ENCODE measurements at regions of chr5 and their contacts with region 1.

Region 1: GRCh38 chr5:154513669-154514084 is 35.6 kb upstream of the HAND1 start:
- DNase-seq: peak; percentile 66
- H3K4me3 Mint-ChIP-seq: no peak overlapping the region
- H3K27ac Mint-ChIP-seq: no peak overlapping the region
- H3K4me1 Mint-ChIP-seq: peaks cover 19% of the 10 kb centered on the region
- H3K27me3 Mint-ChIP-seq: peaks cover 35% of the 10 kb centered on the region

Region 2: GRCh38 chr5:154487541-154487940 is 26.1 kb before region 1 on chr5:
- CTCF ChIA-PET with region 1: interaction called, 4 read pairs
- intact Hi-C with region 1: loop called (anchors 1 kb)
- DNase-seq: peak; percentile 71
- H3K4me3 Mint-ChIP-seq: no peak overlapping the region
- H3K27ac Mint-ChIP-seq: no peak overlapping the region
- H3K4me1 Mint-ChIP-seq: peaks cover 39% of the 10 kb centered on the region
- H3K27me3 Mint-ChIP-seq: peaks cover 76% of the 10 kb centered on the region

Region 3: DNA sequence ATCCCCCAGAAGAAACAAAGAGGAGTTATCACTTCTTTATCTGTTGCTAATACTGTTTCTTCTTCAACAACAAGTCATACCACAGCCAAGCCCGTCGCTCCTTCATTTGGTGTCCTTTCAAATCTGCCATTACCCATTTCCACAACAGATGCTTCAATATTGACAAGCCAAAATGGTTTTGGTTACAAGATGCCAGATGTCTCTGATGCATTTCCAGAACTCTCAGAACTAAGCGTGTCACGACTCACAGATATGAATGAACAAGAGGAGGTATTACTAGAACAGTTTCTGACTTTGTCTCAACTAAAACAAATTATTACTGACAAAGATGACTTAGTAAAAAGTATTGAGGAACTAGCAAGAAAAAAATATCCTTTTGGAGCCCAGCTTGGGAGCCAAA is 19.6 kb before region 1 on chr5:
- CTCF ChIA-PET with region 1: interaction called, 4 read pairs
- intact Hi-C with region 1: loop called (anchors 2 kb)
- DNase-seq: no peak
- H3K4me3 Mint-ChIP-seq: no peak overlapping the region
- H3K27ac Mint-ChIP-seq: no peak overlapping the region
- H3K4me1 Mint-ChIP-seq: no peaks in the 10 kb centered on the region
- H3K27me3 Mint-ChIP-seq: peaks cover 56% of the 10 kb centered on the region

Region 4: GRCh38 chr5:156164306-156164705 is 1650.6 kb after region 1 on chr5:
- CTCF ChIA-PET with region 1: no interaction called
- intact Hi-C with region 1: no loop called
- DNase-seq: no peak
- H3K4me3 Mint-ChIP-seq: no peak overlapping the region
- H3K27ac Mint-ChIP-seq: no peak overlapping the region
- H3K4me1 Mint-ChIP-seq: no peaks in the 10 kb centered on the region
- H3K27me3 Mint-ChIP-seq: no peaks in the 10 kb centered on the region